Mammary epithelial cell (primary cell): ENCODE measurements at regions of chr2 and their contacts with region 1.

Region 1: GRCh38 chr2:11589316-11589940 is 55.6 kb downstream of the GREB1 start:
- DNase-seq: no peak
- H3K4me3 ChIP-seq: no peak overlapping the region
- H3K27ac ChIP-seq: no peak overlapping the region
- H3K4me1 ChIP-seq: no peaks in the 10 kb centered on the region
- H3K27me3 ChIP-seq: no peaks in the 10 kb centered on the region
- CTCF ChIP-seq: peak; percentile 6 to 22

Region 2: GRCh38 chr2:11647834-11648600 is 58.6 kb after region 1 on chr2:
- CTCF ChIA-PET with region 1: no interaction called
- dilution Hi-C with region 1: no loop called
- in situ Hi-C with region 1: no loop called
- intact Hi-C with region 1: loop called (anchors 1 kb)
- DNase-seq: peak; percentile 12
- H3K4me3 ChIP-seq: no peak overlapping the region
- H3K27ac ChIP-seq: no peak overlapping the region
- H3K4me1 ChIP-seq: no peaks in the 10 kb centered on the region
- H3K27me3 ChIP-seq: peaks cover 2% of the 10 kb centered on the region
- CTCF ChIP-seq: peak; percentile 53 to 84